Sigmoid colon (tissue), 7 donors: ENCODE measurements at regions of chr18 and their contacts with region 1.

Region 1: DNA sequence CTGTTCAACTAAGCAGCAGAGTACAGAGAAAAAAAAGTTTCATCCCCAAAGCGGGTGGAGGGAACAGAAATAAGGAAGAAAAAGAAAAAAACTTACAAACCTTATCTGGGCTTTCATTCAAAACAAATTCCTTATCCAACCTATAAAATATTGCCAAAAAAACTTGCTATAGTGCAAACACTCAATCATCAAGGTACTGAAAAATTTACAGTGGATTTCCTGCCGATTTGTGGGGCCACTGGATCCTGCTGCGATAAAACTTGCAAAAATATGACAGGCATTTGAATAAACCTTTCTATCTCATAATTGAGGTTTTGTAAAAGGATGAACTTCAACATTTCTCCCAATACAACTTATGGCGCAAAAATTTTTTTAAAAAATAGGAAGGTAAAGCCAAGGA is 77.0 kb downstream of the ZNF521 start:
- DNase-seq: no peak
- H3K4me3 ChIP-seq: no peak overlapping the region
- H3K27ac ChIP-seq: no peak overlapping the region
- H3K4me1 ChIP-seq: peaks cover 0 to 14% (median 12%) of the 10 kb centered on the region in 4 donors
- H3K27me3 ChIP-seq: no peaks in the 10 kb centered on the region
- CTCF ChIP-seq: no peak
- EP300 ChIP-seq: no peak
- POLR2A ChIP-seq: no peak

Region 2: DNA sequence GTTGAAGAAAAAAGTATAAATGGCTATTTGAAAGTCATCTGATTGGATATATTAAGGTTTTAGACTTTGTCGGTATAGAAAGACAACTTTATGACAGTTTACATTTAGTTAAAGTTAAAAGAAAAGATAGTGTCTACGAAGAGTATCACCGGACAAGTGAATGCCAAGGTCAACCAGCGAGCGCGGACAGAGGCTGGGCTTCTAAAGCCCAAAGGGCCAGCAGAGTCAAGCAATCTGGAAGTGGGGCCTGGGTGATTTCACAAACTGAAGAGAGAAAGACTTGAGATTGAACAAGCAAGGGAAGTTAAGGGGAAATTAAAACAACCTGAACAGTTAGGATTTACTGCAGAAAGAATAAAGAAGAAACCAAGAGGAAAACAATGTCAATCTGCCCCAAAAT is 60.8 kb after region 1 on chr18:
- intact Hi-C with region 1: loop called (anchors 5 kb)
- DNase-seq: no peak
- H3K4me3 ChIP-seq: no peak overlapping the region
- H3K27ac ChIP-seq: no peak overlapping the region
- H3K4me1 ChIP-seq: no peaks in the 10 kb centered on the region
- H3K27me3 ChIP-seq: no peaks in the 10 kb centered on the region
- CTCF ChIP-seq: no peak
- EP300 ChIP-seq: no peak
- POLR2A ChIP-seq: no peak